ENCODE measurements at regions of chr16 and their contacts with region 1.

Region 1: GRCh38 chr16:27740496-27741197 is 190.7 kb downstream of the KATNIP start:
- DNase-seq: no peak
- H3K4me3 ChIP-seq: no peak overlapping the region
- H3K27ac ChIP-seq: no peak overlapping the region
- H3K4me1 ChIP-seq: no peaks in the 10 kb centered on the region
- H3K27me3 ChIP-seq: no peaks in the 10 kb centered on the region
- CTCF ChIP-seq: no peak

Region 2: GRCh38 chr16:27805828-27806351 is 65.2 kb after region 1 on chr16:
- CTCF ChIA-PET with region 1: no interaction called
- dilution Hi-C with region 1: no loop called
- in situ Hi-C with region 1: no loop called
- intact Hi-C with region 1: no loop called
- DNase-seq: no peak
- H3K4me3 ChIP-seq: no peak overlapping the region
- H3K27ac ChIP-seq: no peak overlapping the region
- H3K4me1 ChIP-seq: no peaks in the 10 kb centered on the region
- H3K27me3 ChIP-seq: peaks cover 5% of the 10 kb centered on the region
- CTCF ChIP-seq: no peak

Region 3: DNA sequence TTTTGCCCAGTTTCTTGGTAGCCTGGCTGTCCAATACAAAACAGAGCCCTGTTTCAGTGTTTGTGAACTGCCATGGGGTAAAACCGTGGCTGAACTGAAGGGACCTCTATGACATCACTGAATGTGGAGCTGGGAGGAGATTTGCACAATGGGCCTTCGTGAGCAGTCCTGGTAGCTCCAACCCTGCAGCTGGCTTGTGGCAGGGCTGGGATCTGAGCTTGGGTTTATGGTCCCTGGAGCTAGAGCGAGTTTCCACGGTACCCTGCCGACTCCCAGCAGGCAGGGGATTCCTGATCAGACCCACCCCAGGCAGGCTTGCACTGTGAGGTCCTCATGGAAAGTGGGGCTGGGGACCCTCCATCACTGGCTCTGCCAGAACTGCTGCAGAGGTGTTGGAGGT is 75.9 kb after region 1 on chr16:
- CTCF ChIA-PET with region 1: no interaction called
- dilution Hi-C with region 1: loop called (anchors 5 kb)
- in situ Hi-C with region 1: no loop called
- intact Hi-C with region 1: no loop called
- DNase-seq: no peak
- H3K4me3 ChIP-seq: no peak overlapping the region
- H3K27ac ChIP-seq: no peak overlapping the region
- H3K4me1 ChIP-seq: no peaks in the 10 kb centered on the region
- H3K27me3 ChIP-seq: no peaks in the 10 kb centered on the region
- CTCF ChIP-seq: no peak